ENCODE measurements at regions of chr10 and their contacts with region 1.

Region 1: GRCh38 chr10:102352066-102352715 is 43.3 kb upstream of the NFKB2 start:
- DNase-seq: peak; percentile 63 to 82 (median 70)
- H3K4me3 ChIP-seq: no peak overlapping the region
- H3K27ac ChIP-seq: no peak overlapping the region
- H3K4me1 ChIP-seq: no peaks in the 10 kb centered on the region
- H3K27me3 ChIP-seq: no peaks in the 10 kb centered on the region

Region 2: DNA sequence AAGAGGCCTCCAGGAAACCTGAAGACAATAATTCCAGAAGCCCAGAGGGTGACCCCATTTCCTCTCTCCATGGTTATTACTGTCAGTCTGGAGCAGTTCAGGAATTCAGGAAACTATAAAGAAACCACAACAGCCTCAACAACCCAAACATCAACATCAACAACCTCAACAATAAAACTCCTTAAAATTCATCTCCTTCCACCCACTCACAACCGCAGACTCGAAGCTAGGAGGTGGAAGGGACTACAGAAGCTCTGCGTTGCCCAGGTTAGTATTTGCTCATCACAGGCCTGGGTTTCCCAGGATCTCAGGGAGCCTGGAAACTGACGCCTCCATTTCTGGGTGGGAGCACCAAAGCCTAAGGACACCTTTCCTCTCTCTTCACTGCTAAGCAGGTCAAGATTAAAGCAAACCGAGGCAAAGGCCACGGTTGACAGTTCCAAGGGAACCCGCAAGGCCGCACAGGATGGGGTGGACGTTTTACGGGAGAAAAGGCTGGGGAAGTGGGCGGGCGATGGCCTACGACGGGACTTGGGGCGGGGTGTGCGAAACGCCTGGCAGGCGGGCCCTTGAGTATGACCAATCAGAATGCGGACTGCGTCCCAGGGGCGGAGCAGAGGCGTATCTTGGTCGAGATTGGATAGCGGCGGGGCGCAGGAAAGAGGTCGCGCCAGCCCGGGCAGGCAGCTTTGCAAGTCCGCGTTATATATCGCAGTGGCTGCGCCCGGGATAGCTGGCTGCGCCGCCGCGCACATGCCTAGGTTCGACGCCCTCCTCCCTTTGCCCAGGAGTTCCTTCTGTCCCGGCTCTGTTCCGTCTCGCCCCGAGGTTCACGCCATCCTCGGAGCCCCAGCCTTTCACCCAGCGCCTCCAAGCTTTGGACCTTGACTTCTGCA is 126.3 kb before region 1 on chr10 and contains the start of gene ELOVL3:
- CTCF ChIA-PET with region 1: interaction called, 611 read pairs
- POLR2A ChIA-PET with region 1: no interaction called
- DNase-seq: peak; percentile 90 to 96 (median 95)
- H3K4me3 ChIP-seq: peak within 1 kb of the TSS in 4 of 7 experiments; percentile 9 to 69 (median 36)
- H3K27ac ChIP-seq: no peak within 1 kb of the TSS
- H3K4me1 ChIP-seq: peaks cover 0 to 26% (median 25%) of the 10 kb centered on the region in 4 experiments
- H3K27me3 ChIP-seq: peaks cover 6 to 46% (median 26%) of the 10 kb centered on the region in 5 experiments

Region 3: GRCh38 chr10:102268375-102268888 is 83.8 kb before region 1 on chr10:
- CTCF ChIA-PET with region 1: interaction called, 18 read pairs
- POLR2A ChIA-PET with region 1: no interaction called
- DNase-seq: peak in 2 of 3 donors; percentile 5 to 10
- H3K4me3 ChIP-seq: no peak overlapping the region
- H3K27ac ChIP-seq: no peak overlapping the region
- H3K4me1 ChIP-seq: no peaks in the 10 kb centered on the region
- H3K27me3 ChIP-seq: no peaks in the 10 kb centered on the region

Region 4: DNA sequence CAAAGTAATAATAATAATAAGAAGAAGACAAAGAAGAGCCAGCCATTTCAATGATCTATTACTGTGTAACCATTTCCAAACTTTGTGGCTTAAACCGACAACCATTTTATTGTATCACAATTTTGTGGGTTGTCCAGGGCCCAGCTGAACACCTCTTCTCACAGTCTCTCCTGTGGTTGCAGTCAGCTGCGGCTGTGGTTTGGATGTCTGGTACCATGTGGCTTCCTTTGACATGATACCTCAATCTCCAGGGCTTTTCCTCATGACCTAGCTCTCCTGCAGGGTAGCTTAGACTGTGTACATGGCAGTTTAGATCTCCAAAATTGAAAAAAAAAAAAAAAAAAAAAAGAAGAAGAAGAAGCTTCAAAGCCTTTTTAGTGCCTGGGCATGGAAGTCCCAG is 29.3 kb before region 1 on chr10:
- CTCF ChIA-PET with region 1: interaction called, 16 read pairs
- POLR2A ChIA-PET with region 1: no interaction called
- DNase-seq: peak; percentile 32 to 91 (median 88)
- H3K4me3 ChIP-seq: no peak overlapping the region
- H3K27ac ChIP-seq: no peak overlapping the region
- H3K4me1 ChIP-seq: peaks cover 4 to 17% (median 13%) of the 10 kb centered on the region in 4 experiments
- H3K27me3 ChIP-seq: no peaks in the 10 kb centered on the region

Measured in common myeloid progenitor, CD34-positive (primary cell).